ENCODE measurements at regions of chr3 and their contacts with region 1.

Region 1: DNA sequence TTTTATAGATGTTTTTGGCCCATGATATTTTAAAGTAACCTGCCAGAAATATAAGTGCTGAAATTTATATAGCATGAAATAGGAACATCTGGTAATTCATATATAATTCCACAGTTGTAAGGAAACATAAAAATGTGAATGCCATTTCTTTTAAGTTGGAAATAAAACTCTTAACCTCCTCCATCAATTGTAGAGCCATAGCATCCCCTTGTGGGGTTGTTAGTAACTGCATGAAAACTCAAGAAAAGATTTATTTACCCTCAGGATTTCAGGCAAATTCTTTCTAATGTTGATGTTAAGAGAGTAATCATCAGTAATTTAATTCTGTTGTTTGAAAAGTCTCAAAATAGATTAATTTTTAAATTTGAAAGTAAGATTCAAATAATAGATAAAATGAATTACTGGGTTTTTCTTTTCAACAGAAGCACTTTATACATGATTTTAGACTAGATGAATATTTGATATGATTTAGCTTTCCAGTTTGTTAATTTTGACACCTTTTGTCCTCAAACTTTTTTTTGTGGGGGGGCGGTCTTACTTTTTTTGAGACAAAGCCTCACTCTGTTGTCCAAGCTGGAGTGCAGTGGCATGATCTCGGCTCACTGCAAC is 74.7 kb downstream of the RASA2 start:
- DNase-seq: peak; percentile 67
- H3K4me3 ChIP-seq: no peak overlapping the region
- H3K27ac ChIP-seq: no peak overlapping the region
- H3K4me1 ChIP-seq: peaks cover 29% of the 10 kb centered on the region
- H3K27me3 ChIP-seq: no peaks in the 10 kb centered on the region

Region 2: DNA sequence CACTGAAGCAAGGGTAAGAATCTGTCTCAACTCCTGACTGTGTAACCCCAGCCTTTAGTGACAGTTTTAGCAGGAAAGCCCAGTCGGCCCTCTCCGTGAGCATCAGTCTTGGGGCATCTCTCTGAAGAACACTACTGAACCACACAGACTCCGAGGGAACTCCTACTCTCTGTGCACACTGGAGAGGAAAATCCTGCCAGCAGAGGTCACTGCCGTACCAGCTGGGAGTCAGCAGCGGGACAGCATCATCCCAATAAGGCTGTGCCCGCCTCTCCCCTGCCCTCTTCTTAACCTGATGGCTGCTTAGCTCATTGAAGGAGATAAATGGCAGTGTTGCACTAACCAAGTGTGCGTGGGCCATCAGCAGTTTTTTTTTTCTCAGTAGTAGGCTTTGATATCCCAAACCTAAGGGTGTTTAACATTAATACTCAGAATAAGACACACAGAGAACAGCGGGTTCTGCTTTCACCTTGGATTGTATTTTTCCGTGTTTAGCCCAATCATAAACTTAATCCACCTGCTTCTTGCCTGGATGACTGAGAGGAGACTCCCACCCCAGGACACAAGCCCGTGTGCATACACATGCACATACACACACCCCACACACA is 101.3 kb before region 1 on chr3:
- in situ Hi-C with region 1: loop called (anchors 25 kb)
- DNase-seq: peak; percentile 92
- H3K4me3 ChIP-seq: no peak overlapping the region
- H3K27ac ChIP-seq: no peak overlapping the region
- H3K4me1 ChIP-seq: peaks cover 34% of the 10 kb centered on the region
- H3K27me3 ChIP-seq: no peaks in the 10 kb centered on the region

Region 3: GRCh38 chr3:142129516-142130171 is 568.1 kb after region 1 on chr3:
- in situ Hi-C with region 1: no loop called
- DNase-seq: no peak
- H3K4me3 ChIP-seq: no peak overlapping the region
- H3K27ac ChIP-seq: no peak overlapping the region
- H3K4me1 ChIP-seq: no peaks in the 10 kb centered on the region
- H3K27me3 ChIP-seq: no peaks in the 10 kb centered on the region